Adrenal gland (tissue), 19 donors: ENCODE measurements at regions of chr6 and their contacts with region 1.

Region 1: GRCh38 chr6:108052706-108053105 is 21.8 kb downstream of the OSTM1 start:
- DNase-seq: no peak
- H3K4me3 ChIP-seq: no peak overlapping the region
- H3K27ac ChIP-seq: no peak overlapping the region
- H3K4me1 ChIP-seq: no peaks in the 10 kb centered on the region
- H3K27me3 ChIP-seq: no peaks in the 10 kb centered on the region
- CTCF ChIP-seq: no peak
- POLR2A ChIP-seq: no peak

Region 2: DNA sequence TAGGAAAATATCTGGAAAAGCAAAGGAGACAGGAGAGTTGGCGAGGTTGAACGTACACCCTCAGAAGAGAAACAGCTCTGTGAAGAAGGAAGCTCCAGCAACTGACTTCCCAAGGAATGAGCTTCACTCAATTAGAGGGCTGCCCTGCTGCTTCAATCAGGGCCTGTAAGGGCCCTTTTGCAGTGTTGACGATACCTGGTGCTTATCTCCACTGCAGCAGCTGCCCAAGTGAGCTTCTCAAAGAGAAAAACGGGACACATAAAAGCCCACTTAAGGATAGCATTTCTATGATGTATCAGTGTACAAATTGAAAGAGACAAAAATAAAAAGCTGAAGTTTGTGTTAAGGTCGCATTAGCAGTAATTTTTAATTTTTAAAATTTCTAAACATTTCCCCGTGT is 111.1 kb before region 1 on chr6:
- intact Hi-C with region 1: no loop called
- DNase-seq: no peak
- H3K4me3 ChIP-seq: no peak overlapping the region
- H3K27ac ChIP-seq: peak overlapping the region in 2 of 5 donors; percentile 31 to 48
- H3K4me1 ChIP-seq: peaks cover 34 to 40% of the 10 kb centered on the region in 2 donors
- H3K27me3 ChIP-seq: no peaks in the 10 kb centered on the region
- CTCF ChIP-seq: no peak
- POLR2A ChIP-seq: no peak

Region 3: GRCh38 chr6:107982486-107982885 is 70.2 kb before region 1 on chr6:
- intact Hi-C with region 1: loop called (anchors 5 to 10 kb)
- DNase-seq: no peak
- H3K4me3 ChIP-seq: no peak overlapping the region
- H3K27ac ChIP-seq: no peak overlapping the region
- H3K4me1 ChIP-seq: no peaks in the 10 kb centered on the region
- H3K27me3 ChIP-seq: no peaks in the 10 kb centered on the region
- CTCF ChIP-seq: no peak
- POLR2A ChIP-seq: no peak

Region 4: GRCh38 chr6:107991061-107991460 is 61.6 kb before region 1 on chr6:
- intact Hi-C with region 1: loop called in 1 of 2 experiments (anchors 10 kb)
- DNase-seq: no peak
- H3K4me3 ChIP-seq: no peak overlapping the region
- H3K27ac ChIP-seq: no peak overlapping the region
- H3K4me1 ChIP-seq: peaks cover 4 to 6% of the 10 kb centered on the region in 2 donors
- H3K27me3 ChIP-seq: no peaks in the 10 kb centered on the region
- CTCF ChIP-seq: no peak
- POLR2A ChIP-seq: no peak